ENCODE measurements at regions of chr22 and their contacts with region 1.

Region 1: GRCh38 chr22:36470162-36470993 is 11.1 kb downstream of the TXN2 start:
- DNase-seq: no peak
- H3K4me3 ChIP-seq: no peak overlapping the region
- H3K27me3 ChIP-seq: no peaks in the 10 kb centered on the region
- CTCF ChIP-seq: peak; percentile 99

Region 2: GRCh38 chr22:36286471-36287224 is 183.7 kb before region 1 on chr22:
- CTCF ChIA-PET with region 1: interaction called, 22 read pairs
- POLR2A ChIA-PET with region 1: no interaction called
- DNase-seq: peak; percentile 16
- H3K4me3 ChIP-seq: no peak overlapping the region
- H3K27me3 ChIP-seq: no peaks in the 10 kb centered on the region
- CTCF ChIP-seq: peak; percentile 97

Region 3: GRCh38 chr22:36329254-36330078 is 140.9 kb before region 1 on chr22:
- CTCF ChIA-PET with region 1: interaction called, 19 read pairs
- POLR2A ChIA-PET with region 1: no interaction called
- DNase-seq: peak; percentile 91
- H3K4me3 ChIP-seq: no peak overlapping the region
- H3K27me3 ChIP-seq: no peaks in the 10 kb centered on the region
- CTCF ChIP-seq: no peak

Region 4: GRCh38 chr22:36368359-36368983 is 101.9 kb before region 1 on chr22:
- CTCF ChIA-PET with region 1: interaction called, 10 read pairs
- POLR2A ChIA-PET with region 1: no interaction called
- DNase-seq: no peak
- H3K4me3 ChIP-seq: no peak overlapping the region
- H3K27me3 ChIP-seq: no peaks in the 10 kb centered on the region
- CTCF ChIP-seq: no peak; the same call in 1 of the 2 replicates

Region 5: GRCh38 chr22:36387752-36388518 is 82.4 kb before region 1 on chr22 and contains the start of gene MYH9:
- CTCF ChIA-PET with region 1: interaction called, 23 read pairs
- POLR2A ChIA-PET with region 1: interaction called, 4 read pairs
- DNase-seq: peak; percentile 97
- H3K4me3 ChIP-seq: peak within 1 kb of the TSS; percentile 89
- H3K27me3 ChIP-seq: no peaks in the 10 kb centered on the region
- CTCF ChIP-seq: no peak
- polyA plus RNA-seq, gene MYH9: 262 and 340 TPM in 2 replicates

Region 6: GRCh38 chr22:36454916-36455570 is 15.3 kb before region 1 on chr22:
- CTCF ChIA-PET with region 1: interaction called, 10 read pairs
- POLR2A ChIA-PET with region 1: no interaction called
- DNase-seq: no peak
- H3K4me3 ChIP-seq: peak overlapping the region; percentile 48
- H3K27me3 ChIP-seq: no peaks in the 10 kb centered on the region
- CTCF ChIP-seq: no peak

Region 7: GRCh38 chr22:36493690-36494110 is 23.3 kb after region 1 on chr22:
- CTCF ChIA-PET with region 1: no interaction called
- POLR2A ChIA-PET with region 1: no interaction called
- DNase-seq: no peak
- H3K4me3 ChIP-seq: no peak overlapping the region
- H3K27me3 ChIP-seq: no peaks in the 10 kb centered on the region
- CTCF ChIP-seq: no peak

Region 8: GRCh38 chr22:36506637-36507517 is 36.5 kb after region 1 on chr22 and contains the start of gene FOXRED2:
- CTCF ChIA-PET with region 1: no interaction called
- POLR2A ChIA-PET with region 1: no interaction called
- DNase-seq: no peak
- H3K4me3 ChIP-seq: peak within 1 kb of the TSS; percentile 53
- H3K27me3 ChIP-seq: no peaks in the 10 kb centered on the region
- CTCF ChIP-seq: no peak
- polyA plus RNA-seq, gene FOXRED2: 1.6 and 3.2 TPM in 2 replicates

Region 9: DNA sequence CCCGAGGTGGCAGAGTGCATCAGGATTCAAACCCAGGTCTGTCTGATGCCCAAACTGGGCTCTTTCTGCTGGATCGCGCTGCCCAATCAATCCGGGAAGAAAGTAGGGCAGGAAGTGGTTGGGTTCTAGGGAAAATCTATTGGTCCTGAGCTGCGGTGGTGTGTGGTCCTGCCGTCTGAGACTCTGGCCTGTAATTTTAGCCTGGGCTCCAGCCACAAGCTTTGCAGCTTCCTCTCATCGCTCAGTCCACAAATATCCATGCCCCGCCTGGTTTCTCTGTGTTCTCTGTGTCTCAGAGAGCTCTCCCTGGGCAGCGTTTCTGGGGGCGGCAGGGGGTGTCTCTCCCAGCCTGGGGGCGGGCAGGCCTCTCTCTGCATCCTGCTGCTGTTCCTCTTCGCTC is 214.5 kb after region 1 on chr22:
- CTCF ChIA-PET with region 1: no interaction called
- POLR2A ChIA-PET with region 1: no interaction called
- DNase-seq: no peak
- H3K4me3 ChIP-seq: no peak overlapping the region
- H3K27me3 ChIP-seq: peaks cover 12% of the 10 kb centered on the region
- CTCF ChIP-seq: no peak